SK-MEL-5 (cell line): ENCODE measurements at regions of chr13 and their contacts with region 1.

Region 1: DNA sequence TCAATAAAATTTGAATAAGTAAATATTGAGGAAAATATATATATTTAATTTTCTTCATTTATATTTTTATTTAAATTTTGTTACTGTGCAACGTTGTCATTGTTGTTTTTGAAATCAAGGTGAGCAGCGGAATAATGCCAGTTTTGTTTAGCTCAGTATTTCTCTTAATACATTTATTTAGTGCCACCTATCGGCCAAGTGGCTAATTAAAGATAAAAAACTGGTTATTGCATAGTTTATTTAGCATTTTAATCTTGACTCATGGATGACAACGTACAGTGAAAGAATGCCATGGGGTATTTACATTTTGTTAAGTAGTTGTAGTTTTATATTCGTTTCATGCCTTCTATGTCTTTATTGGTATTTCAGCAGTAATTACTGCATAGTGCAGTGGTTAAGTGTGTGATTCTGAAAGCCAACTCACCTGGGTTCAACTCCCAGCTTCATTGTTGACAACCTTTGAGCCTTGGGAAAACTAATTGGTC is 265.9 kb downstream of the MYO16 start:
- DNase-seq: peak; percentile 72

Region 2: GRCh38 chr13:108342369-108343289 is 552.6 kb before region 1 on chr13:
- in situ Hi-C with region 1: loop called (anchors 25 kb)
- DNase-seq: peak; percentile 69

Region 3: DNA sequence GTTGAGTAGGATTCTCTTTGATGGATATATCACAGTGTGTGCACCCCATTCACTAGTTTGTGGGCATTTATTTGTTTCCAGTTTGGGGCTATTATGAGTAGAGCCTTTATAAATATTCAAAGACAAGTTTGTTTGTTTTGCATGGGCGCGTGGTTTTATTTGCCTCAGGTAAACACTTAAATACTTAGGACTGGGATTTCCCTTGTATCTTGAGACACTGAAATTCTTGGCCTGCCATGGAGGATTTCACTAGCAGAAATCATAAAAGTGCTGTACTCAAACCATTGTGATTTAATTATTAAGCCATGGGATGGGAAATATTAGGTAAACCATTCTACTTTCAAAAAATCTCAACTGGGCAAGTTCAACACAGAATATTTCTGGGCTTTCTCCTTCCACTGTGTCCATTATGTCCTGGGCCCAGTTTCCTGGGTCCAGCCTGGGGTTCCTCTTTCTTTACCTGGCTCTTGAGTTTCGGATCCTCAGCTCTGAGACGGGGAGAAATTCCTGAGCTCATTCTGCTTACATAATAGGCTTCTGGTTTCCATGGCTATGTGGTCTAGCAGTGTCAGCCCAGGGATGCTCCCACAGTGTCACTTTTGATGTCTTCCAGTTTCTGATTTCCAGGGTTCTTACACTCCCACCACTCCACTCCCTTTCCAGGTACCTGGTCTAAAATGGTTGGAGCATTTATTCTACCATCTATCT is 251.5 kb before region 1 on chr13:
- in situ Hi-C with region 1: no loop called
- DNase-seq: no peak